ENCODE measurements at regions of chr12 and their contacts with region 1.

Region 1: GRCh38 chr12:45543906-45544315 is 185.6 kb upstream of the ARID2 start:
- DNase-seq: peak; percentile 77
- CTCF ChIP-seq: peak; percentile 71

Region 2: DNA sequence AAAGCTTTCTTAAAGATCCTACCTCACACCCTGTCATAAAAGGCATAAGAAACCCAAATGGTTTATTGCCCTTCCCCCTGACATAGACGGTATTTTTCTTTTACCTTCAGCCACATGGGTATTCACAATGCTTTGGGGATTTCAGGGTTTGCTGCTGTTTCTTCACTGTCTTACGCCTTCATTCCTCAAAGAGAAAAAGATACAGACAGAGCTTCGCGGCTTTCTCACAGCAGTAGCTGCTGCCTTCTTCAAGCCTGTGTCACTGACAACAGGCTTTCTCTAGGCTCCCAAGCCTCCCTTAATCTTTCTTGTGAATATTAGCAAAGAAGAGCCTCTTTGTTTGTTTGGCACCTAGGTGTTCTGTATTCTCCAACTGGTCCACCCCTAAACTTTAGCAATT is 11.8 kb before region 1 on chr12:
- CTCF ChIA-PET with region 1: interaction called, 30 read pairs
- POLR2A ChIA-PET with region 1: no interaction called
- DNase-seq: no peak
- CTCF ChIP-seq: no peak

Region 3: DNA sequence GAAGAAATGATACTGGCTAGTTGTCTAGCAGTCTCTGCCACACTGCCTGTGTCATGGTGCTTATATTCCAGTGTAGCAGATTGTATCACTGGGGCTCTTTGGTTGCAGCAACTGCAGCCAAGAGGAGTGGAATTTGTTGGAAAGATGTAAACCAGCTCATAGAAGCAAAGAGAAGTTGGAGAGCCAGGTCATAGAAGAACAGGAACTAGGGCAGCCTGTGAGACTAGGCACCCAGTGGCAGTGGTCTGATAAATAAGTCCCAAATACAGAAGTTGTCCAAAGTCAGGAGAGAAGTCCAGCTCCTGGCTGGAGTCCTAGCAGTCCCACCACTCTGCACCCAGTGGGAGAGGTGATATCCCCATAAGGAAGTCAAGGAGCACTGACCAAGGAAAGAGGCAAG is 13.1 kb after region 1 on chr12:
- CTCF ChIA-PET with region 1: interaction called, 47 read pairs
- POLR2A ChIA-PET with region 1: no interaction called
- DNase-seq: no peak
- CTCF ChIP-seq: no peak

Region 4: DNA sequence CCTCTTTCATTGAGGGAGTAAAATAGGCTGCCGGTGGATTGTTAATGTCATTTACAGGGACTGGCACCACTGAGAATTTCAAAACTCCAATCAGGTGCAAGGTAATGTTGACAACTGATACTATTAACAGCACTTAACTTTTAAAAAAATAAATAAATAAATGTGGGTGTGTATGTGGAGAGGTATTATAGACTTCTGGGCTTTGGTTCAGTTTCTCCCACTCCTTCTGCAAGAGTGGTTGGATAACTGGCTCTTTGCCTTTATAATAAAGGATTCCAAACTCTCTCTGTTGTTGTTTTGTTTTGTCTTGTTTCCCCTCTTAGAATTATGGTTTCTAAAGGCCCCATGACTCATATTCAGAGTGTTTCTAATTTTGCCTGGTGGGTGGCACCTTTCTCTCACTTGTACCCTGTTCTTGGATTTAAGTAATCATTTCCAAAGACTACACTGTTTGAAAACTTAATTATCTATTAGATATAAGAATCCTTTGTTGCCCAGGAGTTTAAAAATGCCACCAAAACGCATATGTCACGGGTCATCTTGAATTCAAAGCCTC is 34.0 kb after region 1 on chr12:
- CTCF ChIA-PET with region 1: interaction called, 11 read pairs
- POLR2A ChIA-PET with region 1: no interaction called
- DNase-seq: no peak
- CTCF ChIP-seq: no peak

Region 5: DNA sequence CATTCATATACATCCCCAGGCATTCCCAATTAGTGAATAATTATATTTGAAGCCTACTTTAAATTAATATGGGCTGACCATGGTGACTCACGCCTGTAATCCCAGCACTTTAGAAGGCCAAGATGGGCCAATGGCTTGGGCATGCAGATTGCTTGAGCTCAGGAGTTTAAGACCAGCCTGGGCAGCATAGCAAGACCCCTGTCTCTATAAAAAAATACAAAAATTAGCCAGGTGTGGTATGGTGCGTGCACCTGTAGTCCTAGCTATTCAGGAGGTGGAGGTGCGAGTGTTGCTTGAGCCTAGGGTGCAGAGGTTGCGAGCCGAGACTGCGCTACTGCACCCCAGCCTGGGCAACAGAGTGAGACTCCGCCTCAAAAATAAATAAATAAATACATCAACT is 178.0 kb after region 1 on chr12:
- CTCF ChIA-PET with region 1: interaction called, 46 read pairs
- POLR2A ChIA-PET with region 1: interaction called, 3 read pairs
- DNase-seq: no peak
- CTCF ChIP-seq: no peak

Region 6: GRCh38 chr12:45728630-45729232 is 184.8 kb after region 1 on chr12:
- CTCF ChIA-PET with region 1: interaction called, 46 read pairs
- POLR2A ChIA-PET with region 1: no interaction called
- DNase-seq: peak; percentile 82
- CTCF ChIP-seq: peak; percentile 99

Region 7: DNA sequence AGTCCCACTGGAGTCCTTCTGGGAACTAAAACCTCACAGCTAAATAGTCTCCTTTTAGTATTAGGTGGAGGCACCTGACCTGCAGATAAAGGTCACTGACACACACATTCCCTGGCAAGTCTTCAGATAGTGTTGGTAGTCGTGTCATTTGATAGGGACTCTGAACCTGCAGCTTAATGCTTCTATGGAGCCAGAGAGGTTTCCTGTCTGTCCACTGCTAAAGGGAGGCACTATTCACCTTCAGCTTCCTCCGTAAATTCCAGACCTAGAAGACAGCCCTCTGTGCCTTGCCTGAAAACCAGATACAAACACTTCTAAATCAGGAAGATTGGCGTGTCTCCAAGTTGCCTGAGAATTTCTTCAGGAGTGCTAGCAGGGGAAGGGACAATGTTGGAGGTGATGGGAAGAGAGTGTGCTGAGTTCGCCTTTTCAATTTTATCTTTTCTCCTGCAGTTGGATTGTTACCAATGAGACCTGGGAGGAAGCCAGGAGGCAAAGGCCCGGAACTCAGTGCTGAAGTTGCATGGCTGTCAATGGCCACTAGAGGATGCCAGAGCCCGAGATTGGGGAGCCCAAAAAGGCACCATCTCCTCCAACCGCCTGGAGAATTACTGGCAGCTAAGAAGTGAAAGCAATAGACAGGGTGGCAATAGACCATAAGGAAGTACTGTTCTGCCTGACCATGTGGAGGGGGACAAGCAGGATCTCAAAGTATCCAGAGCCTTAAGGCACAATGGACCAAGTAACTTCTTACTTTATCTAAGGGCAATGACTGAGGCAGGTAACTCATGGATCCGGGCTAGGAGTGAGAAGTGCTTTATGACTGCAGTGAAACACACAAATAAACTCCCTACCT is 528.1 kb after region 1 on chr12:
- CTCF ChIA-PET with region 1: interaction called, 11 read pairs
- POLR2A ChIA-PET with region 1: no interaction called
- DNase-seq: peak; percentile 68
- CTCF ChIP-seq: peak; percentile 89